Dendritic cell treated with granulocyte-macrophage colony-stimulating factor and Interleukin-4, amounts not matched to agents 40 ng/mL and 50 ng/mL, for 4 days (primary cell): ENCODE measurements at regions of chr7 and their contacts with region 1.

Region 1: GRCh38 chr7:116705419-116705818 is 33.4 kb downstream of the MET start:
- H3K4me3 Mint-ChIP-seq: no peak overlapping the region
- H3K27ac Mint-ChIP-seq: no peak overlapping the region
- H3K4me1 Mint-ChIP-seq: no peaks in the 10 kb centered on the region
- H3K27me3 Mint-ChIP-seq: no peaks in the 10 kb centered on the region

Region 2: GRCh38 chr7:116733924-116734580 is 28.6 kb after region 1 on chr7:
- intact Hi-C with region 1: loop called (anchors 2 kb)
- H3K4me3 Mint-ChIP-seq: no peak overlapping the region
- H3K27ac Mint-ChIP-seq: no peak overlapping the region
- H3K4me1 Mint-ChIP-seq: peaks cover 13% of the 10 kb centered on the region
- H3K27me3 Mint-ChIP-seq: no peaks in the 10 kb centered on the region